ENCODE measurements at regions of chr5 and their contacts with region 1.

Region 1: GRCh38 chr5:177403792-177404640 is 3.6 kb upstream of the PFN3 start:
- DNase-seq: peak; percentile 86

Region 2: GRCh38 chr5:177362610-177363507 is 41.2 kb before region 1 on chr5:
- CTCF ChIA-PET with region 1: interaction called, 5 read pairs
- POLR2A ChIA-PET with region 1: interaction called, 19 read pairs
- DNase-seq: peak; percentile 86

Region 3: GRCh38 chr5:177390363-177391300 is 13.4 kb before region 1 on chr5:
- CTCF ChIA-PET with region 1: interaction called, 56 read pairs
- POLR2A ChIA-PET with region 1: interaction called, 12 read pairs
- DNase-seq: peak; percentile 96

Region 4: DNA sequence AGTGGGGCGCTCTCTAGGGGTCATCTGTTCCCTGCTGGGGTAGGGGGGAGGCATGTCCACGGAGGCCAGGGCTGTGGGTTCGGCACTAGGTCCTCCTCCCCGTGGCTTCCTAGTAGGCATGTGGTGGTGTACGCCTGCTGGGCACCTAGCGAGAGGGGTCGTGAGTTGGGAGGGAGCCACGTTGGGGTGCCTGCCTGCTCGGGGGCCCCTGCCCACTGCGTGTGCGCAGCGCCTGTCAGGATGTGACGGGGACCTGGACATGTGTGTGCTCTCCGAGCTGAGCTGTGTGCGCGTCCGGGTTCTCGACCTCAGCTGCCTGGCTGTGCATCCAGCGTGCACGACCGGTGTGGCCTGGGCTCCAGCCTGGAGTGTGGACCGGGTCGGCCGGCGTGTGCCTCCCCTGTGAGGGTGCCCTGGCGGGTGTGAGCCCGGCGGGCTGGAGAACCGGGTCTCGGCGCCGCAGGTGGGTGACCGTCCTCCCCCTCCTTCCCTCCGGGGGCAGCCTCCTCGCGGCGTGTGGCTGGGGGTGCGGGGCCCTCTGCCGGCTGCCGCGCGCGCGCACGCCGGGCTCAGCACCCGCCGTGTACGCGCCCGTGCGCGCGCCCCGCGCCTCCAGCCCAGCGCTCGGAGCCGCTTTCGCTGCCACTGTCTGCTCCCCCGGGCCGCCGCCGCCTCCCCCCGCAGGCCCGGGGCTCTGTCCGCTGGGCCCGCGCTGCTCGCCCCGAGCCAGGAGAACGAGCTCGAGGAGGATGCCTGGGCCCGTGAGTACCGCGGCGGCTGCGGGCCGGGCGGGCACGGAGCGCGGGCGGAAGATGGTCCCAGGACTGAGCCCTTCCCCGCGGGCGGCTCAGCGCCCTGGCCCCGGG is 42.4 kb after region 1 on chr5 and contains the start of gene PRR7:
- CTCF ChIA-PET with region 1: interaction called, 50 read pairs
- POLR2A ChIA-PET with region 1: interaction called, 22 read pairs
- DNase-seq: peak; percentile 81

Measured in HEK293T (cell line).